ENCODE measurements at regions of chr6 and their contacts with region 1.

Region 1: DNA sequence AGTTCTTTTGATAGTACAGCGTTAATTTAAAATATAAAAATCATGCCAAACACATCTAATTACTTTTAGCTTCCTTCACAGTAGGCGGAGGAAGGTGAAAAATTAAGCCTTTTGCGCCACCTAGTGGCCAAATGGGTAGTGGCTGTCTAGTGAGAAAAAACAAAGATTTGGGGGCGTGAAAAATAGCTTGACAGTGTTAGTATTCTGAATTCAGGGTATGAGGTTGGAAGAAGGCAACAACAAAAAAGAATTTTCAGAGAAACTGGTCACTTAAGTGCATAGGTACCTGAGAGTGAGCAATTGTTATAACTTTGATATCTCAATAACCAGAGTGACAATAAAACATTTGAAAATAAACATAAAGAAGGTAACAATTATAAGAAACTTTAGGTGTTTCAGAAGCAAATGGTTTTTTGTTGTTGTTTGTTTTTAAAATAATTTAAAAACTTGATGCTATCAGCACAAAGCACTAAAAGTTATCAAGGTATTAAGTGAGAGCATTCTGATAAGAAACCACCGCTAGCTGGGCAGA is 14.3 kb downstream of the PSMB9 start:
- DNase-seq: peak; percentile 90
- H3K4me3 Mint-ChIP-seq: no peak overlapping the region
- H3K27ac Mint-ChIP-seq: no peak overlapping the region
- H3K4me1 Mint-ChIP-seq: peaks cover 33% of the 10 kb centered on the region
- H3K27me3 Mint-ChIP-seq: no peaks in the 10 kb centered on the region

Region 2: DNA sequence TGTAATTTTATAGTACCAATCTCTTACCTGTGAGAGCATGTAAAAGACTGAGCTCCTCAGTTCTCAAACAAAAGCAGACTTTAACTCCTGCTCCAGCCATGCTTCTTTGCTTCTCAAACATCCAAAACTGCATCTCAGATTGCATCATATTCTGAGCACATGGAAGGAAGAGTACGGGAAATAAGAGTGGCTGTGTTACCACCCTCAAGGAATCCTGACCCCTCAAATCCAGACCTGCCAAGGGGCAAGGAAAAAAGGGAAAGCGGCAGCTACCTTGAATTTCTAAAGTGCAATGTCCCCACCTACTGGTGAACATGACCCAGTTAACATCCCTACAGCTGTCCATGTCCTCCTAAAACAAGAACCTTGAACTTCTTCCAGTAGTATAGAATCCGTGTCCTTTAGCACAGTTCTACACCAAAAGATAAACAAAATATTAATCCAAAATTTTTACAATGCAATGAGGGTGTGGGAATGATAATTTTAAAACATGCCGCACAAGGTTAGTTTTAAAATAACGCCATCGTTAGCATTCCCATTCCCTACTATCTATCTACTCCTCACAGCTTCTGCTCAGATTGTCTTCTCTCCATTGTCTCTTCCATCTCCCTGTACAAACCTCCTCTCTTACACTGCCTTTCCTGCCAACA is 167.8 kb before region 1 on chr6:
- CTCF ChIA-PET with region 1: interaction called, 9 read pairs
- POLR2A ChIA-PET with region 1: no interaction called
- intact Hi-C with region 1: loop called (anchors 5 kb)
- DNase-seq: peak; percentile 20
- H3K4me3 Mint-ChIP-seq: no peak overlapping the region
- H3K27ac Mint-ChIP-seq: no peak overlapping the region
- H3K4me1 Mint-ChIP-seq: peaks cover 2% of the 10 kb centered on the region
- H3K27me3 Mint-ChIP-seq: peaks cover 18% of the 10 kb centered on the region

Region 3: DNA sequence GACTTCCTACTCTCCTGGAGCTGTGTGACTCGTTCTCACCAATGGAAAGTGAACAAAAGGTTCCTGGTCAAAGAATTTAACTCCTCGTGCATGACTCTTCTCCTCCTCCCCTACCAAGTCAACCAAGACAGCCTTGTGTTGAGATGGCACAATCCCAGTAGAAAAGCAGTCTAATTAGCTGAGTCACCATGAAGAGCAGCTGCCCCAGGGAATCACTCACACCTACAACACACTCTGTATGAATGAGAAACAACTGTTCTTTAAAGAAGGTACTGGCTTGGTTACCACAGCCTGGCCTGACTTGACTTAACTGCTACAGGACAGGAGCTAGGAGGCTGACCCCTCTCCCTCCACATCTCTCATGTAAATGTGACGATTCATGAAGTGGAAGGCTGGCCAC is 48.6 kb before region 1 on chr6:
- CTCF ChIA-PET with region 1: interaction called, 16 read pairs
- POLR2A ChIA-PET with region 1: no interaction called
- intact Hi-C with region 1: no loop called
- DNase-seq: no peak
- H3K4me3 Mint-ChIP-seq: no peak overlapping the region
- H3K27ac Mint-ChIP-seq: no peak overlapping the region
- H3K4me1 Mint-ChIP-seq: no peaks in the 10 kb centered on the region
- H3K27me3 Mint-ChIP-seq: no peaks in the 10 kb centered on the region

Region 4: DNA sequence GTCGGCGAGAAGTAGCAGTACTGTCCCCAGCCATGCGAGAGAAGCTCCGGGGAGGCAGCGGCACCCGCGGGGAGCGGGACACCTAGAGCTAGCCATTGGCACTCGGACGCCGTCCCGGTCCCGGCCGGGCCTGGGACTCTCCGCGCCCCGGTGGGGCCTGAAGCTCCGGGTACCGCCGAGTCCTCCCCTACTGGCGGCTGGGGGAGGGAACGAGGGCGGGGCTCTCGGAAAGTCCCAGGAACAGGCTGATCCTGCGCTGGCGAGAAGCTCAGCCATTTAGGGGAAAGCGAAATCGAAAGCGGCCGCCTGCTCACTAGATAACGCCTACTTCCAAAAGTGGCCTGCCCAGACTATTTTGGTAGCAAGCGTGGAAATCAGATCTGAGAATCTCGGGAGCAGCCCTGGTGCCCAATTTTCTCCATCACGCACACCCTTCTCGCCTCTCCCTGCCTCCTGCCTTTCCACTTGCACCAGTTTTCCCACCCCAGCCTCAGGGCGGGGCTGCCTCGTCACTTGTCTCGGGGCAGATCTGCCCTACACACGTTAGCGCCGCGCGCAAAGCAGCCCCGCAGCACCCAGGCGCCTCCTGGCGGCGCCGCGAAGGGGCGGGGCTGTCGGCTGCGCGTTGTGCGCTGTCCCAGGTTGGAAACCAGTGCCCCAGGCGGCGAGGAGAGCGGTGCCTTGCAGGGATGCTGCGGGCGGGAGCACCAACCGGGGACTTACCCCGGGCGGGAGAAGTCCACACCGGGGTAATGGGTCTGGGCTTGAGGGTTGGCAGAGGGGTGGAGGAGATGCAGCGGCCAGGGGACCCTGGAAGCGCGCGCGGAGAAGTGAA is 14.6 kb before region 1 on chr6 and contains the starts of genes PSMB9 and TAP1:
- CTCF ChIA-PET with region 1: interaction called, 83 read pairs
- POLR2A ChIA-PET with region 1: interaction called, 27 read pairs
- intact Hi-C with region 1: loop called (anchors 1 kb)
- DNase-seq: peak; percentile 97
- H3K4me3 Mint-ChIP-seq: peak within 1 kb of the TSS; percentile 99
- H3K27ac Mint-ChIP-seq: peak within 1 kb of the TSS; percentile 98
- H3K4me1 Mint-ChIP-seq: peaks cover 54% of the 10 kb centered on the region
- H3K27me3 Mint-ChIP-seq: no peaks in the 10 kb centered on the region
- total RNA-seq, gene PSMB9: 296 to 302 TPM
- total RNA-seq, gene TAP1: 245 to 258 TPM

Region 5: GRCh38 chr6:32912951-32913350 is 44.6 kb after region 1 on chr6:
- CTCF ChIA-PET with region 1: interaction called, 10 read pairs
- POLR2A ChIA-PET with region 1: no interaction called
- intact Hi-C with region 1: no loop called
- DNase-seq: no peak
- H3K4me3 Mint-ChIP-seq: no peak overlapping the region
- H3K27ac Mint-ChIP-seq: no peak overlapping the region
- H3K4me1 Mint-ChIP-seq: peaks cover 4% of the 10 kb centered on the region
- H3K27me3 Mint-ChIP-seq: peaks cover 15% of the 10 kb centered on the region

Region 6: GRCh38 chr6:32984605-32985389 is 116.5 kb after region 1 on chr6:
- CTCF ChIA-PET with region 1: interaction called, 30 read pairs
- POLR2A ChIA-PET with region 1: no interaction called
- intact Hi-C with region 1: no loop called
- DNase-seq: peak; percentile 93
- H3K4me3 Mint-ChIP-seq: no peak overlapping the region
- H3K27ac Mint-ChIP-seq: no peak overlapping the region
- H3K4me1 Mint-ChIP-seq: peaks cover 19% of the 10 kb centered on the region
- H3K27me3 Mint-ChIP-seq: no peaks in the 10 kb centered on the region